CD8-positive, alpha-beta T cell (primary cell): ENCODE measurements at regions of chr7 and their contacts with region 1.

Region 1: GRCh38 chr7:4753711-4754432 is 21.6 kb upstream of the AP5Z1 start:
- DNase-seq: peak; percentile 69 to 95 (median 86)
- ATAC-seq: peak; percentile 98
- H3K4me3 ChIP-seq: no peak overlapping the region
- H3K4me3 Mint-ChIP-seq: no peak overlapping the region
- H3K27ac ChIP-seq: no peak overlapping the region
- H3K27ac Mint-ChIP-seq: no peak overlapping the region
- H3K4me1 ChIP-seq: peaks cover 19% of the 10 kb centered on the region
- H3K4me1 Mint-ChIP-seq: peaks cover 17% of the 10 kb centered on the region
- H3K27me3 ChIP-seq: no peaks in the 10 kb centered on the region
- H3K27me3 Mint-ChIP-seq: no peaks in the 10 kb centered on the region
- CTCF ChIP-seq: peak; percentile 83

Region 2: GRCh38 chr7:3911685-3912084 is 842.2 kb before region 1 on chr7:
- CTCF ChIA-PET with region 1: no interaction called
- POLR2A ChIA-PET with region 1: no interaction called
- intact Hi-C with region 1: no loop called
- DNase-seq: no peak
- ATAC-seq: no peak
- H3K4me3 ChIP-seq: no peak overlapping the region
- H3K4me3 Mint-ChIP-seq: no peak overlapping the region
- H3K27ac ChIP-seq: no peak overlapping the region
- H3K27ac Mint-ChIP-seq: no peak overlapping the region
- H3K4me1 ChIP-seq: no peaks in the 10 kb centered on the region
- H3K4me1 Mint-ChIP-seq: no peaks in the 10 kb centered on the region
- H3K27me3 ChIP-seq: no peaks in the 10 kb centered on the region
- H3K27me3 Mint-ChIP-seq: peaks cover 18% of the 10 kb centered on the region
- CTCF ChIP-seq: no peak

Region 3: GRCh38 chr7:4610768-4611467 is 143.0 kb before region 1 on chr7:
- CTCF ChIA-PET with region 1: interaction called, 46 read pairs
- POLR2A ChIA-PET with region 1: interaction called, 3 read pairs
- intact Hi-C with region 1: loop called in 1 of 2 experiments (anchors 1 kb)
- DNase-seq: peak; percentile 12 to 80 (median 59)
- ATAC-seq: peak; percentile 91
- H3K4me3 ChIP-seq: no peak overlapping the region
- H3K4me3 Mint-ChIP-seq: no peak overlapping the region
- H3K27ac ChIP-seq: no peak overlapping the region
- H3K27ac Mint-ChIP-seq: no peak overlapping the region
- H3K4me1 ChIP-seq: no peaks in the 10 kb centered on the region
- H3K4me1 Mint-ChIP-seq: peaks cover 8% of the 10 kb centered on the region
- H3K27me3 ChIP-seq: no peaks in the 10 kb centered on the region
- H3K27me3 Mint-ChIP-seq: peaks cover 6% of the 10 kb centered on the region
- CTCF ChIP-seq: peak; percentile 70

Region 4: DNA sequence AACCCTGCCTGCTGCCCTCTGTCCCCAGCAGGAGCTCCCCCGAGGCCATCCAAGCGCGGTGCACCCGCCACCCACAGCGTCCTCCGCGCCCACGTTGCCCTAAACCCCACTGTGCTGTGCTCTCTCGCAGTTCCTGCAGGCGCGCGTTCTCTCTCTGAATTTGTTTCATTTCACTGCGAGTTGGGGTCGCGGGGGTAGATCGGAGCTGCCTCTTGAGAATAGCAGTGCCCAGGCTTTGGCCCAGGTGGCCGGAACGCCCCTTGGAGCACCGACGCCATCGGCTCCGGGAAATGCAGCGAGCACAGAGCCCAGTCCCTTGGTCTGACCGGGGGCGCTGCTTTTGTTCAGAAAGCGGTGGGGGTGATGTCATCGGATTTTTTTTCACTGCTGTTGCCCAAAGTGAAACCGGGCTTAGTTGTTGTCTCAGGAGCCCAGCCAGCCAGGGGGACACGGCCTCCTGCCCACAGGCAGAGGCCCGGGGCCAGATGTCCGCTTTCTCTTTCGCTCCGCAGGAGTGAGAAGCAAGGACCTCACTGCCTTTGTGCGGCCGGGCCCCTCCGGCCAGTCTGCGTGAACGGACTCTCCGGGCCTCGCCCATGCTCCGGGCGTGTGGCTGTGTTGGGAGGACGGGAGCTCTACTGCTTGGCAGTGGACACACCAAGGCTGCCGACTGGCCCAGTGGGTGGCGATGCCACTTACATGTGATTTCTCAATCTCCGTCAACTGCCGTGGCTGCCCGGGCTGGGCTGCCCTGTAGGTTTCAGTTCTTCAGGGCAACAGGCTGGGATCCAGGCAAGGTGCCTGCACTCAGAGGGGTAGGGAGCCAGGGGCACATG is 28.6 kb before region 1 on chr7:
- CTCF ChIA-PET with region 1: interaction called, 7 read pairs
- POLR2A ChIA-PET with region 1: no interaction called
- intact Hi-C with region 1: loop called in 1 of 2 experiments (anchors 1 kb)
- DNase-seq: peak in 8 of 9 experiments; percentile 30 to 84 (median 66)
- ATAC-seq: peak; percentile 81
- H3K4me3 ChIP-seq: peak overlapping the region; percentile 70 to 80
- H3K4me3 Mint-ChIP-seq: peak overlapping the region; percentile 95
- H3K27ac ChIP-seq: peak overlapping the region; percentile 91 to 94
- H3K27ac Mint-ChIP-seq: peak overlapping the region; percentile 99
- H3K4me1 ChIP-seq: peaks cover 54% of the 10 kb centered on the region
- H3K4me1 Mint-ChIP-seq: peaks cover 55% of the 10 kb centered on the region
- H3K27me3 ChIP-seq: no peaks in the 10 kb centered on the region
- H3K27me3 Mint-ChIP-seq: no peaks in the 10 kb centered on the region
- CTCF ChIP-seq: no peak

Region 5: DNA sequence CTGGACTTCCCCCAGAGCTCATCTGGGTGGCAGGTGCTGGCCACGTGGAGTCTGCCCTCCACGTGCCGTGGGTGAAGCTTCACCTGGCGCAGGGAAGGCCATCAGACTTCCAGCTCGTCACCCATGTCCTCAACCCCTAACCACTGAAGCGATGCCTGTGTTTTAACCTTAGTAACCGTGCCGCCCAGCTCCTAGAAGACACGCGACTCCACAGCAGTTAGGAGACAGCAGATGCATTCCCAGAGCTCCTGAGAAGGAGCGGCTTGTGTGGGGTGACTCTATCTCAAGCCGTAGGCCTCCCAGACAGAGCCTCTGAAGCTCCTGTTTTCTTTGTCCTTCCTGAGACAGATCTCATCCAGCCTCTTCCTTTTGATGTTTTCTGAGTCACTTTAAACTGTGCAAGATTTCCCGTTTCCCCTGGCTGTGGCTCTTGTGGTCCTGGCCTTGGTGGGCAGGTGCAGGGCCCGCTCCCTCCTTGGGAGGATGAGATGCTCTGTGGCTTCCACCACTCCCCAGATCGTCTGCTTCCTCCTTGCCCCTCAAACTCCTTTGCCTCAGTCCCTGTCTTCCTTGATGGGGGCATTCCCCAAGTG is 19.8 kb before region 1 on chr7:
- CTCF ChIA-PET with region 1: interaction called, 13 read pairs
- POLR2A ChIA-PET with region 1: no interaction called
- intact Hi-C with region 1: no loop called
- DNase-seq: peak in 4 of 9 experiments; percentile 36 to 61 (median 60)
- ATAC-seq: peak; percentile 47
- H3K4me3 ChIP-seq: peak overlapping the region in 1 of 2 experiments; percentile 26
- H3K4me3 Mint-ChIP-seq: peak overlapping the region; percentile 62
- H3K27ac ChIP-seq: no peak overlapping the region
- H3K27ac Mint-ChIP-seq: peak overlapping the region; percentile 93
- H3K4me1 ChIP-seq: peaks cover 67% of the 10 kb centered on the region
- H3K4me1 Mint-ChIP-seq: peaks cover 65% of the 10 kb centered on the region
- H3K27me3 ChIP-seq: no peaks in the 10 kb centered on the region
- H3K27me3 Mint-ChIP-seq: no peaks in the 10 kb centered on the region
- CTCF ChIP-seq: no peak

Region 6: DNA sequence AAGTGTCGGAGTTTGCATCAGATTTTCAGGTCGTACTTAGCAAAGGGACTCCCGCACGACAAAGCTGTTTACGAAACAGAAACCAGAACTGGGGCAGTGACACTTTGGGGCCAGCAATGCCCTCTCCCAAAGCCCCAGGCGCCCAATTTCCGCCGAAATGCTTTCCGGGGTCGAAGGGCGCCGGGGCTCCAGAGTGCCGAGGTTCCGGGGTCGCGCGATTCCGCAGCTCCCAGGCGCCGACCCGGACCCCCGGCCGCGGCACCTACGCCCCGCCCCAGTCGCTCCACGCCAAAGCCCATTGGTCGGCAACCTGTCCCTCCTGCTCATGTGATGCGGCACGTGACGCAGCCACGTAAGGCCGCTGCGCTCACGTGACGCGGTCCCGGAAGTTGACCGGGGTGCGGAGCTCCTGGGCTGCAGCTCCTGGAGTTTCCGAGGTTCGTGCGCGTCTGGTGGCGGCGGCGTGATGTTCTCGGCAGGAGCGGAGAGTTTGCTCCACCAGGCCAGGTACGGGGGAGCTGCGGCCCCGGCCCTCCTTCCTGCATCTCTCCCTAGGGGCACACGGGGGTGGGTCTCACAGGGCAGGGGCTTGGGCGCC is 21.5 kb after region 1 on chr7 and contains the start of gene AP5Z1:
- CTCF ChIA-PET with region 1: interaction called, 4 read pairs
- POLR2A ChIA-PET with region 1: interaction called, 11 read pairs
- intact Hi-C with region 1: no loop called
- DNase-seq: peak; percentile 90 to 99 (median 95)
- ATAC-seq: peak; percentile 93
- H3K4me3 ChIP-seq: peak within 1 kb of the TSS; percentile 80 to 98
- H3K4me3 Mint-ChIP-seq: peak within 1 kb of the TSS; percentile 99
- H3K27ac ChIP-seq: peak within 1 kb of the TSS; percentile 93 to 94
- H3K27ac Mint-ChIP-seq: peak within 1 kb of the TSS; percentile 99
- H3K4me1 ChIP-seq: peaks cover 25% of the 10 kb centered on the region
- H3K4me1 Mint-ChIP-seq: peaks cover 47% of the 10 kb centered on the region
- H3K27me3 ChIP-seq: no peaks in the 10 kb centered on the region
- H3K27me3 Mint-ChIP-seq: no peaks in the 10 kb centered on the region
- CTCF ChIP-seq: no peak
- total RNA-seq, gene AP5Z1: 129 to 131 TPM